ENCODE measurements at regions of chr17 and their contacts with region 1.

Region 1: GRCh38 chr17:67784364-67785121 is 40.8 kb upstream of the BPTF start:
- DNase-seq: no peak
- ATAC-seq: no peak
- H3K4me3 ChIP-seq: no peak overlapping the region
- H3K4me3 Mint-ChIP-seq: no peak overlapping the region
- H3K27ac ChIP-seq: no peak overlapping the region
- H3K27ac Mint-ChIP-seq: no peak overlapping the region
- H3K4me1 ChIP-seq: no peaks in the 10 kb centered on the region
- H3K4me1 Mint-ChIP-seq: no peaks in the 10 kb centered on the region
- H3K27me3 ChIP-seq: no peaks in the 10 kb centered on the region
- H3K27me3 Mint-ChIP-seq: peaks cover 6% of the 10 kb centered on the region
- CTCF ChIP-seq: no peak

Region 2: GRCh38 chr17:66214884-66215528 is 1569.5 kb before region 1 on chr17:
- CTCF ChIA-PET with region 1: no interaction called
- POLR2A ChIA-PET with region 1: no interaction called
- intact Hi-C with region 1: loop called in 1 of 2 experiments (anchors 10 kb)
- DNase-seq: no peak
- ATAC-seq: no peak
- H3K4me3 ChIP-seq: no peak overlapping the region
- H3K4me3 Mint-ChIP-seq: no peak overlapping the region
- H3K27ac ChIP-seq: no peak overlapping the region
- H3K27ac Mint-ChIP-seq: no peak overlapping the region
- H3K4me1 ChIP-seq: no peaks in the 10 kb centered on the region
- H3K4me1 Mint-ChIP-seq: no peaks in the 10 kb centered on the region
- H3K27me3 ChIP-seq: peaks cover 0 to 4% of the 10 kb centered on the region in 2 experiments
- H3K27me3 Mint-ChIP-seq: peaks cover 5% of the 10 kb centered on the region
- CTCF ChIP-seq: no peak

Region 3: DNA sequence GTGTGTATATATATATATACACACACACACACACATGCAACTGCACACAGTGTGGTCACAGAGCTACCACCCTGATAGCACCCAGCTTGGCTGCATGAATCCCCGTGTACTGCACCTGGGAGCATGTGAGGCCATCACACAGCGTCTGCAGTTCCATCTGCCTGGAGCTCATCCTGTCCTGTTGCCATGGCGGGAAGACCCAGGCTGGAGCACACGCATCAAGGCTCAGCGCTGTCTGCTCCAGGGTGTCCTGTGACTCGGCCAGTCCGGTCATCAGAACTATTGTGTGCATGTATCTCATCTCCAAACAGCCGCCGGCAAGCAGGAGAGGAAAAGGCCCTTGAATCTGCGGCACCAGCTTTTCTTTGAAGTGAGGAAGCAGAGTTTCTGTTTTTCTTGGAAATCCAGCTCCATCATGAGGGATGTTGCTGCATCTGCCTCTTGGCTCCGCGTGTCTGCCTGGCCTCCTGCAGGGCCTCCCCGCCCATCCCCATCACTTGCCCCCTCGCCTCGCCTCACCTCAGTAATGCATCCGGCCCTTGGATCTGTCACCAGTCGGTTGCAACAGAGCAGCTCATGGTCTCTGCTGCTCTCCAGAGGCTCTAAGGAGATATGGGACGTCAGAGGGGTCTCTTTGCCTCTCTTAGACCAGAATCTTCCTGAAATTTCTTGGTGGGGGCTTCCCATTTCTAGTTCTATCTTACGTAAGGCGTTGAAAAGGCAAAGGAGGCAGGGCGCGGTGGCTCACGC is 796.3 kb before region 1 on chr17:
- CTCF ChIA-PET with region 1: no interaction called
- POLR2A ChIA-PET with region 1: no interaction called
- intact Hi-C with region 1: no loop called
- DNase-seq: no peak
- ATAC-seq: no peak
- H3K4me3 ChIP-seq: no peak overlapping the region
- H3K4me3 Mint-ChIP-seq: no peak overlapping the region
- H3K27ac ChIP-seq: no peak overlapping the region
- H3K27ac Mint-ChIP-seq: no peak overlapping the region
- H3K4me1 ChIP-seq: no peaks in the 10 kb centered on the region
- H3K4me1 Mint-ChIP-seq: peaks cover 4% of the 10 kb centered on the region
- H3K27me3 ChIP-seq: no peaks in the 10 kb centered on the region
- H3K27me3 Mint-ChIP-seq: peaks cover 43% of the 10 kb centered on the region
- CTCF ChIP-seq: no peak

Region 4: DNA sequence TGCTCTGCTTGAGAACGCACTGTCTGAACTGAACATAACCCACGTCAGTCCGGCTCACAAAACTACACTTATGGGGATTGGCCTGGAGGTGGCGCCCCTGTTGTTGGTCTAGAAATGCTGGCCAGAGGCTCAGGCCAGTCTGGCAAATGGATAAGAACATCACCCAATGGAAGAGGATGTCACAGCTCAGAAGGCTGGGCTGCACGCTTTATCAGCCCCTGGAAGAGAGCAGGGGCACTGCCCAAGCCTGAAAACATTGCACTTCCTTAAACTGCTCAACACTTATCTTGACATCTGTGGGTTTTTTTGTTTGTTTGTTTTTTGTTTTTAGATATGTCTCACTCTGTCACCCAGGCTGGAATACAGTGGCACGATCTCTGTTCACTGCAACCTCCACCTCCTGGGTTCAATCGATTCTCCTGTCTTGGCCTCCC is 16.0 kb after region 1 on chr17:
- CTCF ChIA-PET with region 1: no interaction called
- POLR2A ChIA-PET with region 1: no interaction called
- intact Hi-C with region 1: no loop called
- DNase-seq: peak in 8 of 9 experiments; percentile 29 to 62 (median 40)
- ATAC-seq: peak; percentile 49
- H3K4me3 ChIP-seq: no peak overlapping the region
- H3K4me3 Mint-ChIP-seq: no peak overlapping the region
- H3K27ac ChIP-seq: no peak overlapping the region
- H3K27ac Mint-ChIP-seq: no peak overlapping the region
- H3K4me1 ChIP-seq: no peaks in the 10 kb centered on the region
- H3K4me1 Mint-ChIP-seq: peaks cover 2% of the 10 kb centered on the region
- H3K27me3 ChIP-seq: no peaks in the 10 kb centered on the region
- H3K27me3 Mint-ChIP-seq: peaks cover 3% of the 10 kb centered on the region
- CTCF ChIP-seq: peak; percentile 46

Region 5: GRCh38 chr17:69677130-69677529 is 1892.6 kb after region 1 on chr17:
- CTCF ChIA-PET with region 1: no interaction called
- POLR2A ChIA-PET with region 1: no interaction called
- intact Hi-C with region 1: no loop called
- DNase-seq: no peak
- ATAC-seq: no peak
- H3K4me3 ChIP-seq: no peak overlapping the region
- H3K4me3 Mint-ChIP-seq: no peak overlapping the region
- H3K27ac ChIP-seq: no peak overlapping the region
- H3K27ac Mint-ChIP-seq: no peak overlapping the region
- H3K4me1 ChIP-seq: no peaks in the 10 kb centered on the region
- H3K4me1 Mint-ChIP-seq: no peaks in the 10 kb centered on the region
- H3K27me3 ChIP-seq: no peaks in the 10 kb centered on the region
- H3K27me3 Mint-ChIP-seq: no peaks in the 10 kb centered on the region
- CTCF ChIP-seq: no peak

Measured in CD8-positive, alpha-beta T cell (primary cell).